Upper lobe of right lung (tissue), 1 donor: ENCODE measurements at regions of chr3 and their contacts with region 1.

Region 1: DNA sequence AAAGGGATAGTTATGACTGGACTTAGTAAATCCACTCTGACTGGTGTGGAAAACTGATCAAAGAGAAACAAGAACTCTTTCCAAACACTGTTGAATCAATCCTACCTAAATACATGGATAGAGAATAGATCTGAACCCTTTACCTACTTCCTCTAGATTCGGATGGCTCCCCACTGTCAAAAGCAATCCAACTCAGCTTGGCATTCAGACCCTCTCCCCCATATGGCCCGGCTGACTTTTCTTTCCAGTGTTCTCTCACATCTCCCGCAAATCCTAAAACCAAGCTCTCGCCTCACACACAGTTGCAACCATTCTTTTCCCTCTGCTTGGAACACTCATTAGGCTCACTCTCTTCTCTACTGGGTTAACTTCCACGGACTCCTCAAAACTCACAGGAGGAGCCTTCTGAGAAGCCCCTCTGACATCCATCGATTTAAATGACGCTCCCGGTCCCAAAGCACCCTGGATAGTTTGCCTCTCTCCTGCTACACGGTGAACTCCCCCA is 639 bp downstream of the SPICE1 start:
- DNase-seq: no peak
- ATAC-seq: no peak
- H3K4me3 ChIP-seq: peak overlapping the region; percentile 98
- H3K27ac ChIP-seq: peak overlapping the region; percentile 92
- H3K4me1 ChIP-seq: peaks cover 6% of the 10 kb centered on the region
- H3K27me3 ChIP-seq: no peaks in the 10 kb centered on the region
- CTCF ChIP-seq: no peak

Region 2: GRCh38 chr3:113575206-113575605 is 60.9 kb after region 1 on chr3:
- intact Hi-C with region 1: loop called (anchors 10 kb)
- DNase-seq: no peak
- ATAC-seq: no peak
- H3K4me3 ChIP-seq: no peak overlapping the region
- H3K27ac ChIP-seq: no peak overlapping the region
- H3K4me1 ChIP-seq: no peaks in the 10 kb centered on the region
- H3K27me3 ChIP-seq: no peaks in the 10 kb centered on the region
- CTCF ChIP-seq: no peak